Heart right ventricle (tissue), 16 donors: ENCODE measurements at regions of chr3 and their contacts with region 1.

Region 1: DNA sequence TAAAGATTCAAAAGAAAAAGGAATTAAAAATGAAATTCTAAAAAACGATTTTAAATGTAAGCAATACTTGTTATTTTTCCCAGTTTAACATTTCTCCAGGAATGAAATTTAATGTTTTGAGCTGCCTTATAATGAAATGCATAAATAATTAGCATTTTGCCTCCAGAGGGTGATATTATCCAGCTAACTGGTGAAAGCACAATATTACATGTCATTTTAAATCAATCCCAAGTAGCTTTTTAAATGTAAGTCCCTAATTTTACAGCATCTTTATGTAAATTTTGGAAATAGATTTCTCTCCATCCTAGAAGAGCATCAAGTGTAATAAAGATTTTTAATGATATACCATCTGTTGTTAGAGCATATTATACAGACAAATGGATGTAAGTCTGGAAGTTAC is 139.1 kb upstream of the P2RY1 start:
- DNase-seq: no peak
- ATAC-seq: no peak
- H3K4me3 ChIP-seq: no peak overlapping the region
- H3K27ac ChIP-seq: no peak overlapping the region
- H3K4me1 ChIP-seq: no peaks in the 10 kb centered on the region
- H3K27me3 ChIP-seq: no peaks in the 10 kb centered on the region
- CTCF ChIP-seq: peak in 4 of 9 donors; percentile 20 to 32 (median 28)

Region 2: GRCh38 chr3:152811974-152812760 is 116.3 kb after region 1 on chr3:
- intact Hi-C with region 1: no loop called
- DNase-seq: no peak
- ATAC-seq: no peak
- H3K4me3 ChIP-seq: no peak overlapping the region
- H3K27ac ChIP-seq: no peak overlapping the region
- H3K4me1 ChIP-seq: no peaks in the 10 kb centered on the region
- H3K27me3 ChIP-seq: no peaks in the 10 kb centered on the region
- CTCF ChIP-seq: no peak

Region 3: GRCh38 chr3:152961323-152961722 is 265.5 kb after region 1 on chr3:
- intact Hi-C with region 1: loop called in 2 of 10 experiments (anchors 5 kb)
- DNase-seq: no peak
- ATAC-seq: peak in 1 of 8 donors; percentile 37
- H3K4me3 ChIP-seq: no peak overlapping the region
- H3K27ac ChIP-seq: no peak overlapping the region
- H3K4me1 ChIP-seq: no peaks in the 10 kb centered on the region
- H3K27me3 ChIP-seq: no peaks in the 10 kb centered on the region
- CTCF ChIP-seq: peak in 7 of 9 donors; percentile 23 to 49 (median 37)